Right cardiac atrium (tissue), 5 donors: ENCODE measurements at regions of chr1 and their contacts with region 1.

Region 1: GRCh38 chr1:32400876-32401631 is 6.8 kb upstream of the BSDC1 start:
- DNase-seq: peak; percentile 94 to 97 (median 94)
- ATAC-seq: peak; percentile 99
- H3K4me3 ChIP-seq: no peak overlapping the region
- H3K27ac ChIP-seq: peak overlapping the region; percentile 33
- H3K4me1 ChIP-seq: no peaks in the 10 kb centered on the region
- H3K27me3 ChIP-seq: no peaks in the 10 kb centered on the region

Region 2: GRCh38 chr1:32413507-32414185 is 12.6 kb after region 1 on chr1:
- intact Hi-C with region 1: no loop called
- DNase-seq: peak in 2 of 3 donors; percentile 38 to 71
- ATAC-seq: peak; percentile 76 to 87
- H3K4me3 ChIP-seq: no peak overlapping the region
- H3K27ac ChIP-seq: no peak overlapping the region
- H3K4me1 ChIP-seq: no peaks in the 10 kb centered on the region
- H3K27me3 ChIP-seq: no peaks in the 10 kb centered on the region

Region 3: DNA sequence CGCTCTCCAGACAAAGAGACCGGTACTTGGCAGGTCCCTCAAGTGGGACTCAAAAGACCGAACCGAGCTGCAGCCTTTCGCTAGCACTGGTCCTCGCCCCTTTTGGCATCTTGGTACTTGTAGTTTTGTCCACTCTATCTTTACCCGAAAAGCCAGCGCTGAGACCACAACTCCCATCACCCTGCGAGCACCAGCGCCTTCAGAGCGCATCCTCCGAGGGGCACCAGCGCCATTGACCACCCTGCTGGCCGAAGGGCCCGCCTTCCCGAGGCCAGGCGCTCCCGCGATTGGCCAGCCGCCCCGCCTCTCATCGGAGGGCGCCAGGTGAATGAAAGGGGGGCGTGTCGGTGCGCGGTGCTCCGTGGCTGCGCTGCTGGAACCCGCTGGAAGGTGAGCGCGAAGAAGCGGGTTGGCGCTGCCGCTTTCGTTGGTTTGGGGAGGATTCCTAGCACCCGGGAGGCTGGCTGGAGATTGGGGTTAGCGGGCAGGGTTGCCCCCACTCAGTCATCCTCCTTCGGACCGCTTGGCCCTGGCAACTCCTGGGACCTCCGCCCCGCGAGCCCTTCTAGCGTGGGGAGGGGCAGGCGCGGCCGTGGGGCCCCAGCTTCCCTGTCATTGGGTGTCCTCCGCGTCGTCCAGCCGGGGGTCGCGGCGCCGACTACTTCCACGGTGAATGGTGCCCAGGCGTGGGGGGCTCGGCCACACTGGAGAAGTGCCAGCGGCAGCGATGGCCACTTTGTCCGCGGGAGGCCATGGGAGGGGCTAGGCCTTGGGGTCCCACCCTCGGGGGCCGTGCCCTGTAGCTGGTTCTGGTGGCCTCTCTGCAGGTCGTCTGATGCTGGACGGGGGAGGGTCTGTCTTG is 63.9 kb after region 1 on chr1 and contains the start of gene ZBTB8B:
- intact Hi-C with region 1: no loop called
- DNase-seq: peak; percentile 76 to 93 (median 92)
- ATAC-seq: peak; percentile 96 to 98
- H3K4me3 ChIP-seq: peak within 1 kb of the TSS; percentile 10
- H3K27ac ChIP-seq: no peak within 1 kb of the TSS
- H3K4me1 ChIP-seq: no peaks in the 10 kb centered on the region
- H3K27me3 ChIP-seq: no peaks in the 10 kb centered on the region
- total RNA-seq, gene ZBTB8B: 0.03 TPM in 3 of 4 donors, not detected in the other

Region 4: DNA sequence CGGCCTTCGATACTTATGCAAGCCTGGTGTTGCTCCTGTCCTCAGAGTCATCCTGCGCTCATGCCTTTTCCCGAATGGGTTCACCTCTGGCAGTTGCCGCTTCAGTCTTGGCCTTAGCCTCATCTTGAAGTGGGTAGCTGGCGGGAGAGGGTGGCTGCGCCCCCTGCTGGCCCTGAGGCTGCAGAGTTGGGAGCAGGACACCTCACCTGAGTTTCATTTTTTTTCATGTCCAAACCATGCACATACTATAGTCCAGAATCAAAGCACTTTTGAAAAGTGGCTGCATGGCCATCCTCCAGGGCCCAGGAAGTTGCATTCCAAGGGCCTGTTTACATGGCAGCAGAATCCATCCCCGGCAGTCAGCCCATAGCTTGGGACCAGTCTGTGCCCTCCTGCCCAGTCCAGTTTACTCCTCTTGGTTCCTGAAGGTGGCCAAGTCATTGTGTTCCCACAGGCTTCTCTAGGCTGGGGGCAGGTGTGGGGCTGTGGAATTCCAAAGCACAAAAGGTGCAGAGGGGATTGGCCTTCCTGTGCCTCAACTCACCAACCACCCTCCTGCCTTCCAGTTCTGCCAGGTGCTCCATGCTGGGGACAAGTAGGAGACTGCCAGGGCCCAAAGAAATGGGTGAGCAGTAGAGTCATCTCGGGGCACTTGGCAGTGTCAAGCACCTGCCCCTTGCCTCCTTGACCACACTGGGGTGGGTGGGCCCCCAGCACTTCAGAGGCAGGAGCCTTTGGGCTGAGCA is 372.1 kb after region 1 on chr1:
- intact Hi-C with region 1: loop called in 1 of 4 experiments (anchors 10 kb)
- DNase-seq: peak; percentile 81 to 95 (median 92)
- ATAC-seq: peak; percentile 76 to 81
- H3K4me3 ChIP-seq: no peak overlapping the region
- H3K27ac ChIP-seq: no peak overlapping the region
- H3K4me1 ChIP-seq: no peaks in the 10 kb centered on the region
- H3K27me3 ChIP-seq: no peaks in the 10 kb centered on the region